PC-3 (cell line): ENCODE measurements at regions of chr4 and their contacts with region 1.

Region 1: GRCh38 chr4:70885174-70885573 is 17.0 kb upstream of the MOB1B start:
- DNase-seq: peak; percentile 19
- ATAC-seq: peak; percentile 38; the same call in 1 of the 2 replicates
- H3K4me3 ChIP-seq: no peak overlapping the region
- H3K27ac ChIP-seq: no peak overlapping the region
- H3K4me1 ChIP-seq: no peaks in the 10 kb centered on the region
- H3K27me3 ChIP-seq: no peaks in the 10 kb centered on the region
- CTCF ChIP-seq: 0 out of 2 replicates have a peak, but pooled peaks have one; percentile 16

Region 2: GRCh38 chr4:70062000-70062399 is 823.2 kb before region 1 on chr4:
- CTCF ChIA-PET with region 1: no interaction called
- POLR2A ChIA-PET with region 1: no interaction called
- intact Hi-C with region 1: no loop called
- DNase-seq: no peak
- ATAC-seq: no peak
- H3K4me3 ChIP-seq: no peak overlapping the region
- H3K27ac ChIP-seq: no peak overlapping the region
- H3K4me1 ChIP-seq: no peaks in the 10 kb centered on the region
- H3K27me3 ChIP-seq: 0 out of 2 replicates have a peak, but pooled peaks cover 4% of the 10 kb centered on the region
- CTCF ChIP-seq: no peak

Region 3: GRCh38 chr4:71026086-71026485 is 140.9 kb after region 1 on chr4:
- CTCF ChIA-PET with region 1: interaction called, 11 read pairs
- POLR2A ChIA-PET with region 1: no interaction called
- intact Hi-C with region 1: no loop called
- DNase-seq: peak; percentile 78
- ATAC-seq: peak; percentile 64
- H3K4me3 ChIP-seq: no peak overlapping the region
- H3K27ac ChIP-seq: no peak overlapping the region
- H3K4me1 ChIP-seq: peaks cover 11% of the 10 kb centered on the region; the same call in 1 of the 2 replicates
- H3K27me3 ChIP-seq: no peaks in the 10 kb centered on the region
- CTCF ChIP-seq: no peak